Activated CD4-positive, alpha-beta memory T cell treated with anti-CD3 and anti-CD28 coated beads for 36 hours (primary cell): ENCODE measurements at regions of chr5 and their contacts with region 1.

Region 1: DNA sequence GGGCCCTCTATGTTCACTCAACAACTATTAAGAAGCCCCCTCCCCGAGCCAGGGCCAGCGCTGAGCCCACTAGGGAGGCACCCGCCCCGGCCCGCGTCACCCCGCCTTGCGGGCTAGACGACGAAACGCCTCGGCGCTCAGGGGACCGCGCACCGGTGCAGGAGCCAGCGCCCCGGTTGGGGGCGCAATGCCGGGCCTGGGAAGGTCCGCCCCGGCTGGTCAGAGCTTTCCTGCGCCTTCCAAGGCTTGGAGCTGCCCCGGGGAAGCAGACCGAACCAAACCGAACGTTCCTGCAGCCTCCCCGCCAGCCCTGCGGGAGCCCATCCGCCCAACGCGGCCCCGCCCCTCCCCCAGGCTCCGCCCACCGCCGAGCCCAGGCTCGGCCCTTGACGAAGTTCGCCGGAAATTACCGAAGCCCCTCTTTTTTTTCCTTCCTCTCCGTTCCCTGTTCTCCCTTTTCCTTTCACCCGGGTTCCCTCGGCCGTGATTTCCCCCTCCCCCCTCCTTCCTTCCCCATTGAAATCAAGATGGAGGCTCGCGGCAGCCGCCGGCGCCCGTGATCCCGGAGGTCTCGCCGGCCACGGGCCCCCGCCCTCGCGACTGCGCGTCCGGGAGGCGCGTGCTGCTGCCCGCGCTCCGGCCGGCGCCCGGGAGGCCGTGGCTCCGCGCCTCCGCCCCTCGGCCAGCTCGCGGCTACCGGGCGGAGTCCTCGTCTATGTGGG is at the start of gene TRIO:
- DNase-seq: peak; percentile 80
- H3K4me3 Mint-ChIP-seq: peak within 1 kb of the TSS; percentile 75
- H3K27ac Mint-ChIP-seq: peak within 1 kb of the TSS; percentile 5
- H3K4me1 Mint-ChIP-seq: peaks cover 12% of the 10 kb centered on the region
- H3K27me3 Mint-ChIP-seq: peaks cover 44% of the 10 kb centered on the region
- total RNA-seq, gene TRIO: 6.0 to 6.6 TPM

Region 2: DNA sequence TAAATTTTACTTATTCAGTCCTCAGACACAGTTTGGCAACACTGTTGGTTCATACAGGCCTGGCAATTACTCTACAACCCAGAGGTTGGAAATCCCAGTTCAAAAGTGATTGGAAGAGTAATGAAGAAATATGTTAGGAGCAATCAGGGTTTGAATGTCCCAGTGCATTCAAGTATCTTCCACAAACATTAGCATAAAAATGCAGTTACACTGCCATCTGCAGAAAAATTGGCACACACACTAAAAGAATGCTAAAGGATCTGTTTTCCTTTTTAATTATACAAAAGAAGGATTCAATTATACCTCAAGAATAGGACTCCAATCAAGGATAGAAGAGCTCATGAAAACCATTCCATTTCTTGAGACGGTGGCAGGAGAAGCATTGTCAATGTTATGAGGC is 328.7 kb before region 1 on chr5:
- CTCF ChIA-PET with region 1: no interaction called
- POLR2A ChIA-PET with region 1: no interaction called
- intact Hi-C with region 1: no loop called
- DNase-seq: no peak
- H3K4me3 Mint-ChIP-seq: no peak overlapping the region
- H3K27ac Mint-ChIP-seq: no peak overlapping the region
- H3K4me1 Mint-ChIP-seq: no peaks in the 10 kb centered on the region
- H3K27me3 Mint-ChIP-seq: no peaks in the 10 kb centered on the region

Region 3: DNA sequence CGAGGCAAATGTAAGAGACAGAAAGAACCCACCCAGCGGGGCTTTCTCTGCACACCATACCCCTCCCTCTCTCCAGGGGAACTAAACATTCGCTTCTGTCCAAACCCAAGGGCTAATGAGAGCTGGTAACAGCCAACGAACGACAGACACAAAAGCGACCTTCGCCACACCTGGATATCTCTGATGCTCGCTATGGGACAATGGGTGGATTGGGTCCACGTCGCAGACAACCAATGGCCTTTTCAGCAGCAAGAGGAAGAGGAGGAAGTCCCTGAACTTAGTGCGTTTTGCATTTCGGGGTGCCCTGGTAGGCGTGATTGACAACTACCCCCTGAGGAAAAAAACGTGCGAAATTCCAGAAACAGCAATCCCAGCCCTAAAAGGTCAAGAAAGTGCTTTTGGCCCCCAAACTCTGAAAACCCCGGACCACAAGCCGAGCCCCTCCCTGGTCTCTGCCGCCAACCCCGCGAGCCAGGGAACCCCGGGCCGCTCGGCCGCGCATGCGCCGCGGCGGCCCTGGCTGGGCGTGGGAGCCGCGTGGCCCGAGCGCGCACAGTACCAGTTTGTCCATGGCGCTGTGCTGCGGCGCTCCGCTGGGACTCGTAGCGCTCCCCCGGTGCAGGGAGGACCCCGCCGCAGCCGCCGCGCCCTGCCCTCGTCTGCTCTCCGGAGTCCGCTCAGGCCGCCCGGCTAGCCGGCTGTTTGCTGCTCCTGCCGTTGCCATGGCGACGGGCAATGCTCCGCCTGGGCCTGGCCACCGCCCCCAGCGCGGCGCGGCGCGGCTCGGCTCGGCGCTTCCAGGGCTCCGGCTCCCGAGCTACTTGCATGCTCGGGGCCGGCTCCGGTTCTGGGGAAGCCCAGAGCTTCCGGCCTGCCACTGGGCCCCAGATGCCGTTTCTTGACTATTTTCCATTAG is 131.6 kb before region 1 on chr5:
- CTCF ChIA-PET with region 1: no interaction called
- POLR2A ChIA-PET with region 1: no interaction called
- intact Hi-C with region 1: loop called (anchors 10 kb)
- DNase-seq: peak; percentile 52
- H3K4me3 Mint-ChIP-seq: peak overlapping the region; percentile 62
- H3K27ac Mint-ChIP-seq: no peak overlapping the region
- H3K4me1 Mint-ChIP-seq: peaks cover 10% of the 10 kb centered on the region
- H3K27me3 Mint-ChIP-seq: peaks cover 22% of the 10 kb centered on the region

Region 4: GRCh38 chr5:14108170-14108996 is 34.6 kb before region 1 on chr5:
- CTCF ChIA-PET with region 1: no interaction called
- POLR2A ChIA-PET with region 1: no interaction called
- intact Hi-C with region 1: loop called (anchors 2 kb)
- DNase-seq: peak; percentile 32
- H3K4me3 Mint-ChIP-seq: no peak overlapping the region
- H3K27ac Mint-ChIP-seq: no peak overlapping the region
- H3K4me1 Mint-ChIP-seq: peaks cover 17% of the 10 kb centered on the region
- H3K27me3 Mint-ChIP-seq: peaks cover 15% of the 10 kb centered on the region

Region 5: GRCh38 chr5:14190194-14191164 is 47.5 kb after region 1 on chr5:
- CTCF ChIA-PET with region 1: no interaction called
- POLR2A ChIA-PET with region 1: no interaction called
- intact Hi-C with region 1: no loop called
- DNase-seq: no peak
- H3K4me3 Mint-ChIP-seq: no peak overlapping the region
- H3K27ac Mint-ChIP-seq: no peak overlapping the region
- H3K4me1 Mint-ChIP-seq: no peaks in the 10 kb centered on the region
- H3K27me3 Mint-ChIP-seq: peaks cover 1% of the 10 kb centered on the region

Region 6: DNA sequence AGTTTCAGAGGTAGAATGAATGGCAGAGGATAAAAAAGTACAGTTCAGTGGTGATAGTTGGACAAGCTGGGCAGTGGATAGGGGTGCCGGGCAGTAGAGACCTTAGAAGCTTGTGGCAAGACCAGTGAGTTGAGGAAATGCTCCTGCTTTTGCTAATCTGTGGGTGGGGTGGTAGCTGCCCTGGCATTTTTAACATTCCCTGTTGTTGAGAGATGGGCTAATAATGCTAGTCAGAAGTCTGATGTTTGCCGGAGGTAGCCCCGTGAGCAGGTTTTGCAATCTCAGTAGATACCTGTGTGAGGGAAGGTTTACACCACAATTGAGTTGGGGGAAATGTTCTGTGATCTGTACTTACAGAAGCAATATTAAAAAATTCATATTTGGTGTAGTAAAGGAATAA is 91.2 kb after region 1 on chr5:
- CTCF ChIA-PET with region 1: no interaction called
- POLR2A ChIA-PET with region 1: no interaction called
- intact Hi-C with region 1: no loop called
- DNase-seq: no peak
- H3K4me3 Mint-ChIP-seq: no peak overlapping the region
- H3K27ac Mint-ChIP-seq: no peak overlapping the region
- H3K4me1 Mint-ChIP-seq: no peaks in the 10 kb centered on the region
- H3K27me3 Mint-ChIP-seq: peaks cover 8% of the 10 kb centered on the region

Region 7: GRCh38 chr5:14264604-14265316 is 121.8 kb after region 1 on chr5:
- CTCF ChIA-PET with region 1: no interaction called
- POLR2A ChIA-PET with region 1: no interaction called
- intact Hi-C with region 1: loop called (anchors 10 kb)
- DNase-seq: peak; percentile 82
- H3K4me3 Mint-ChIP-seq: no peak overlapping the region
- H3K27ac Mint-ChIP-seq: no peak overlapping the region
- H3K4me1 Mint-ChIP-seq: peaks cover 6% of the 10 kb centered on the region
- H3K27me3 Mint-ChIP-seq: peaks cover 22% of the 10 kb centered on the region

Region 8: DNA sequence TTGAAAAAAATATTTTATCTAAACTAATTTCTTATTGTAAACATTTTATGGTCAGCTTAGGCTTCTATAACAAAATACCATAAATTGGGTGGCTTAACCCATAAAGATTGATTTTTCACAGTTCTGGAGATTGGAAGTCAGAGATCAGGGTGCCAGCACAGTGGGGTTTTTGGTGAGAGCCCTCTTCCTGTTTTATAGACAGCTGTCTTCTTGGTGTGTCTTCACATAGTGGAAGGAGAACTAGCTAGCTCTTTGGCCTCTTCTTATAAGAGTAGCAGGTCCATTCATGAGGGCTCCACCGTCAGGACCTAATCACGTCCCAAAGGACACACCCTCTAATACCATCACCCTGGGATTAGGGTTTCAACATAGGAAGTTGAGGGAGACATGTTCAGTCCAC is 465.2 kb after region 1 on chr5:
- CTCF ChIA-PET with region 1: no interaction called
- POLR2A ChIA-PET with region 1: no interaction called
- intact Hi-C with region 1: no loop called
- DNase-seq: no peak
- H3K4me3 Mint-ChIP-seq: no peak overlapping the region
- H3K27ac Mint-ChIP-seq: no peak overlapping the region
- H3K4me1 Mint-ChIP-seq: no peaks in the 10 kb centered on the region
- H3K27me3 Mint-ChIP-seq: no peaks in the 10 kb centered on the region